ENCODE measurements at regions of chr6 and their contacts with region 1.

Region 1: DNA sequence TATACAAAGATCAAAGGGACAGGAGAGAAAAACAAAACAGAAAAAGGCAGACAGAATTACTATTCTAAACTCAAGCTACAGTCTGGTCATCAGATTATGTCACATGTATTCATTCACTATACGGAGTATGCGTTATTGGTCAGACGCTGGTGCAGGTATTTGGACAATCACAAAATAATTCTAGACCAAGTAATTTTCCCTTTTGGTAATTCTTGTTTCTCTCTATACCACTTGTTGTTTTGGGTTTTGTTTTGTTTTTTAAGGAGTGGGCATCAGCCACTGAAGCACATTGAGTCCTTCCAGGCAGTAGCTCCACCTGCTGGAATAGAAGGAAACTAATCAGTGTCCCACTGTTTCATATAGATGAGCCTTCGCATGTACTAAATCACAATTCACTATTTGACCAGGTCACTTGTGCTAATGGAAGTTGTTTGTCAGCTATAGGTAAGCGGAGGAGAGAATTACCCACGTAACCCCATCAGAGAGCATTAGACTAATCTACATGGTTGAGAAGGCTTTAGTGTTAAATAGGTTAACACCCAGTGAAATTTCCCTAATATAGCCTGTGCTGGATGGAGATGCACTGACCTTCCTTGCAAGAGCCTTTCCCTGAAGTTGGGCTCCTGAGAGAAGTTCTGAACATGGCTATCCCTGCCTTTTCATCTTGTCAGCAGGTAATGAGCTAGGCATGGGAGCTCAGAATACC is 77.9 kb downstream of the TNFAIP3 start:
- DNase-seq: peak in 1 of 4 donors; percentile 38
- ATAC-seq: peak; percentile 80
- H3K4me3 ChIP-seq: no peak overlapping the region
- H3K27ac ChIP-seq: no peak overlapping the region
- H3K4me1 ChIP-seq: no peaks in the 10 kb centered on the region
- H3K27me3 ChIP-seq: no peaks in the 10 kb centered on the region
- CTCF ChIP-seq: peak in 6 of 7 experiments; percentile 65 to 82 (median 78)
- POLR2A ChIP-seq: no peak

Region 2: DNA sequence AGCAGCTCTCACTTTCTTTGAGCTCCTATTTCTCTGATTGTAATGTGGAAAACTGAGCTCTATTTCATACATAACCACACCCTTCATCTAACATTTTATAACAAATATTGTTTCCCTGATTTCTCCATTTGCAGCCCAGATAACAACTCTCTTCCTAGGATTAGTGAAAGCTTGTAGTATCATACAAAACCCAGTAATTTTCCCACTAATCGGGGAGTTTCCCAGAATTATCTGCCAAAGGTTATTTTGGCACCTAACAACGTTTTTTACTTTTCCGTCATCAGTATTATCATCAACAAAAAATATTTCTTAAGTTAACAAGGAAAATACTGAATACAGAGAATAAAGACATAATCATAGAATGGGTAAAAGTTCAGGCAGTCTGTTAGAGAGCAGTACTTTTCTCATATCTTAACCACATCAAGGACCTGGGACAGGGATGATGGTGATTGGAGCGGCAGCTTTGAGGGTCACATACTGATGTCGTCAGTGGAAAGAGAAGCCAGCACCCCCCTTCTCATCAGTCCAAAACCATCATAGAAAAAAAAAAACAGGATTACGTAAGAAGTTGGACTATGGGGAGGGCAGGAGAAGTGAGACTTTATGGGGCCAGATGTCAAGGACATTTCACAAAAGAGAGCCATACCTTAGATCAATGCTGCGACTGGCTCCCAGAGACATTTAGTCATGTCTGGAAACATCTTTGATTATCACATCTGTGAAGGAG is 244.0 kb before region 1 on chr6:
- intact Hi-C with region 1: loop called (anchors 5 kb)
- DNase-seq: no peak
- ATAC-seq: no peak
- H3K4me3 ChIP-seq: no peak overlapping the region
- H3K27ac ChIP-seq: peak overlapping the region in 2 of 4 donors; percentile 1 to 4
- H3K4me1 ChIP-seq: peaks cover 63% of the 10 kb centered on the region
- H3K27me3 ChIP-seq: no peaks in the 10 kb centered on the region
- CTCF ChIP-seq: no peak
- POLR2A ChIP-seq: no peak

Region 3: DNA sequence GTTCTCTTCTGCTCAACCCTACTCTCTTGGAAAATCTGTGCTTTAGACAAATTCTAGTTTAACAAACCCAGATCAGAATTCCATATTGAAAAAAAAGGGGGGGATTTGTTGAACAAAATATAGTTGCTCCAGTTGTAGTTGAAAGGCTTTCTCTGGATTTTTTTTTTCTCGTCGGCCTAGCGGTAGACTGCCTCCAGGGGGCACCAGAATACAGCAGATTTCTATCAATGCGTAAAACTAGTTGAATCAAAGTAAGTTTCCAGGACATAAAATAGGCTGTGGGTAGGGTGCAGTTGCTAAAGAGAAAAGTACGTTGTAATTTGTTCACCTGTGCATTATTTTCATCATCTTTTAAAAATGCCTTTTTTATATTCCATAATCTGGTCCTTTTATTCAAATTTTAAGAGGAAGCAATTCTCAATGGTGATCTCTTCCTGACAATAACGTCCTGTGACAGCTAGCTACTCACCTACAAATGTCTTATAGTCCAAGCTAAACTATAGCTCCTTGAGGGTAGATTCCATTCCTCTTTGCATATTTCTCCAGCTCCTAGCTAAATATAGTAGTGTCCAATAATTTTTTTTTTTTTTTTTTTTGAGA is 56.9 kb after region 1 on chr6:
- intact Hi-C with region 1: no loop called
- DNase-seq: peak; percentile 65 to 75 (median 73)
- ATAC-seq: peak; percentile 71
- H3K4me3 ChIP-seq: no peak overlapping the region
- H3K27ac ChIP-seq: no peak overlapping the region
- H3K4me1 ChIP-seq: no peaks in the 10 kb centered on the region
- H3K27me3 ChIP-seq: no peaks in the 10 kb centered on the region
- CTCF ChIP-seq: peak; percentile 67 to 95 (median 78)
- POLR2A ChIP-seq: no peak

Region 4: GRCh38 chr6:138517635-138518034 is 572.7 kb after region 1 on chr6:
- intact Hi-C with region 1: no loop called
- DNase-seq: peak; percentile 43 to 55 (median 50)
- ATAC-seq: peak; percentile 65
- H3K4me3 ChIP-seq: no peak overlapping the region
- H3K27ac ChIP-seq: no peak overlapping the region
- H3K4me1 ChIP-seq: peaks cover 3% of the 10 kb centered on the region
- H3K27me3 ChIP-seq: no peaks in the 10 kb centered on the region
- CTCF ChIP-seq: peak; percentile 21 to 50 (median 43)
- POLR2A ChIP-seq: no peak

Measured in body of pancreas (tissue), 4 donors.